Adrenal gland (tissue), 19 donors: ENCODE measurements at regions of chr3 and their contacts with region 1.

Region 1: GRCh38 chr3:197667978-197668377 is 68.7 kb downstream of the RUBCN start:
- DNase-seq: no peak
- H3K4me3 ChIP-seq: no peak overlapping the region
- H3K27ac ChIP-seq: no peak overlapping the region
- H3K4me1 ChIP-seq: no peaks in the 10 kb centered on the region
- H3K27me3 ChIP-seq: no peaks in the 10 kb centered on the region
- CTCF ChIP-seq: no peak
- POLR2A ChIP-seq: no peak

Region 2: GRCh38 chr3:197599089-197599765 is 68.8 kb before region 1 on chr3:
- intact Hi-C with region 1: loop called in 1 of 2 experiments (anchors 5 kb)
- DNase-seq: peak; percentile 74 to 90 (median 80)
- H3K4me3 ChIP-seq: no peak overlapping the region
- H3K27ac ChIP-seq: no peak overlapping the region
- H3K4me1 ChIP-seq: peaks cover 3 to 7% of the 10 kb centered on the region in 2 donors
- H3K27me3 ChIP-seq: no peaks in the 10 kb centered on the region
- CTCF ChIP-seq: peak; percentile 81 to 92 (median 84)
- POLR2A ChIP-seq: no peak